A673 (cell line): ENCODE measurements at regions of chr15 and their contacts with region 1.

Region 1: DNA sequence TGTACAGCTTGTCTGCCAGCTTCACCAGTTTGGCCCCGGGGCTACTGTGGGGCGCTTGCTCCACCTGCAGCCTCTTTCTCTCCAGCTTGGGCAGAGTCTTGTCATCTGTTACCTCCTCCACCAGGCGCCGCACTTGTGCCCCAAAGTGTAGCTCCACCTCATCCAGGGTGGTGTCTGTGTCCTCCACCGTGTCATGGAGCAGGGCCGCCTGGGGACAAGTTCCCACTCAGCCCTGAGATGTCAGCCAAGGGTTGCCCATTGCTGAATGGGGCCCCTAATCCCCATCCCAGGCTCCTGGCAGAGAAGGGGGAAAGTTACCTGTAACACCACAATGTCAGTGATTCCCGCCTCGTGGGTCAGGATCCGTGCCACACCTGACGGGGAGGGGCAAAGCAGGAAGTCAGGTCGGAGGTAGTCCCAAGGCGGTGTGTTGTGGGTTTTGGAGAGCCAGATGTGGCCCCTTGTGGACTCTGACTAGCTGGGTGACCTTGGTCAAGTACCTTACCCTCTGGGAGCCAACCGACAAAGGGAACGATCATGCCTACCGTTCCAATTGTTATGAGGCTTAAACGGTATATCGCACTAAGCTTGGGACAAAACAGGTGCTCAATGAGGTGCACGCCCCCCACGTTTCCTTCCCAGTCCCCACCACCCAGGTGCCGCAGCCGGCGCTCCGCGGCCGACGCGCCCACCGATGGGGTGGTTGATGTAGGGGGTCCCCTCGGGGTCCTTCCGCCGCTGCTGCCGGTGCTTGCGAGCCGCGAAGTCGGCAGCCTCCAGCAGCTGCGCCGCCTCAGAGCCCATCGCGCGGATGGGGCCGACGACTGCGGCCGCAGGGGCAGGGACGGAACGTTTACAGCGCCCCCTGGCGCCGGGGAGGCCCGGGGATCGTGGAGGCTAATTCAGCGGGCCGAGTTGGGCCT is at the start of gene HDDC3:
- DNase-seq: peak; percentile 88
- H3K4me3 ChIP-seq: peak within 1 kb of the TSS; percentile 96
- H3K27ac ChIP-seq: peak within 1 kb of the TSS; percentile 86
- H3K4me1 ChIP-seq: peaks cover 27% of the 10 kb centered on the region
- H3K27me3 ChIP-seq: no peaks in the 10 kb centered on the region
- CTCF ChIP-seq: peak; percentile 97
- total RNA-seq, gene HDDC3: 22.6 and 23.9 TPM in 2 replicates

Region 2: DNA sequence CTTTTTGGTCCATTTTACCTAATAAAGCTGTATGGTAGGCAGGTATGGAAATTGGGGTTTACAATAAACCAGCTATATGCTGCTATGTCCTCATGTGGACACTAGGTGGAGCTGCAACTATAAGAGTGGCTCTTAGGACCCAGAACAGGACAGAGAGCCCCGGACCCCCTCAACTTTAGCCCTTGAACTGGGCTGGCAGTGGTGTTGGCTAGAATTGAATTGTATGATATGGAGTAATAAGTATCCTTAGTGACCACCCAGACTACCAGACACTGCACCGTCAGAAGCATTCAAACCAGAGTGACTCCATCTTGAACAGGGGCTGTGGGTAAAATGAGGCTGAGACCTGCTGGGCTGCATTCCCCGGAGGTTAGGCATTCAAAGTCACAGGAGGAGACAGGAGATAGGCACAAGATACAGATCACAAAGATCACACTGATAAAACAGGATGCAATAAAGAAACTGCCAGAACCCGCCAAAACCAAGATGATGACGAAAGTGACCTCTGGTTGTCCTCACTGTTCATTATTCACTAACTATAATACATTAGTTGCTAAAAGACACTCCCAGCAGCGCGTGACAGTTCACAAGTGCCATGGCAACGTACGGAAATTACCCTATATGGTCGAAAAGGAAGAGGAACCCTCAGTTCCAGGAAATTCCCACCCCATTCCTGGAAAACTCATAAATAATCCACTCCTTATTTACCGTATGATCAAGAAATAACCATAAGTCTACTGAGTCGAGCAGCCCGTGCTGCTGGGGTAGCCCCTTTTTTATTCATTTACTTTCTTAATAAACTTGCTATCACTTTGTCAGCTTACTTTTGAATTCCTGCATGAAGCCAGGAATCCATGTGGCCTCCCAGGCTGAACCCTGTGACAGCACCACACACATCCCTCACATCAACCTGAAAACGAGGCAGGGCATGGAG is 283.6 kb before region 1 on chr15:
- CTCF ChIA-PET with region 1: interaction called, 9 read pairs
- POLR2A ChIA-PET with region 1: no interaction called
- intact Hi-C with region 1: loop called (anchors 5 kb)
- DNase-seq: peak; percentile 84
- H3K4me3 ChIP-seq: no peak overlapping the region
- H3K27ac ChIP-seq: peak overlapping the region; percentile 80
- H3K4me1 ChIP-seq: peaks cover 29% of the 10 kb centered on the region
- H3K27me3 ChIP-seq: no peaks in the 10 kb centered on the region
- CTCF ChIP-seq: peak; percentile 91

Region 3: GRCh38 chr15:90902040-90902839 is 29.8 kb before region 1 on chr15:
- CTCF ChIA-PET with region 1: interaction called, 9 read pairs
- POLR2A ChIA-PET with region 1: no interaction called
- intact Hi-C with region 1: loop called (anchors 2 kb)
- DNase-seq: peak; percentile 88
- H3K4me3 ChIP-seq: peak overlapping the region; percentile 69
- H3K27ac ChIP-seq: peak overlapping the region; percentile 84
- H3K4me1 ChIP-seq: peaks cover 10% of the 10 kb centered on the region
- H3K27me3 ChIP-seq: no peaks in the 10 kb centered on the region
- CTCF ChIP-seq: peak; percentile 80

Region 4: GRCh38 chr15:90946538-90946937 is 14.5 kb after region 1 on chr15:
- CTCF ChIA-PET with region 1: interaction called, 4 read pairs
- POLR2A ChIA-PET with region 1: interaction called, 11 read pairs
- intact Hi-C with region 1: no loop called
- DNase-seq: no peak
- H3K4me3 ChIP-seq: no peak overlapping the region
- H3K27ac ChIP-seq: no peak overlapping the region
- H3K4me1 ChIP-seq: no peaks in the 10 kb centered on the region
- H3K27me3 ChIP-seq: no peaks in the 10 kb centered on the region
- CTCF ChIP-seq: no peak

Region 5: GRCh38 chr15:91049378-91050127 is 117.6 kb after region 1 on chr15:
- CTCF ChIA-PET with region 1: interaction called, 17 read pairs
- POLR2A ChIA-PET with region 1: no interaction called
- intact Hi-C with region 1: no loop called
- DNase-seq: peak; percentile 76
- H3K4me3 ChIP-seq: no peak overlapping the region
- H3K27ac ChIP-seq: no peak overlapping the region
- H3K4me1 ChIP-seq: peaks cover 3% of the 10 kb centered on the region
- H3K27me3 ChIP-seq: no peaks in the 10 kb centered on the region
- CTCF ChIP-seq: peak; percentile 77